ENCODE measurements at regions of chr2 and their contacts with region 1.

Region 1: GRCh38 chr2:102442967-102443828 is 20.2 kb downstream of the IL18RAP start:
- DNase-seq: peak; percentile 61
- H3K4me3 Mint-ChIP-seq: peak overlapping the region; percentile 17
- H3K27ac Mint-ChIP-seq: no peak overlapping the region
- H3K4me1 Mint-ChIP-seq: peaks cover 13% of the 10 kb centered on the region
- H3K27me3 Mint-ChIP-seq: no peaks in the 10 kb centered on the region

Region 2: GRCh38 chr2:102251042-102251848 is 192.0 kb before region 1 on chr2:
- CTCF ChIA-PET with region 1: interaction called, 63 read pairs
- DNase-seq: peak; percentile 67
- H3K4me3 Mint-ChIP-seq: peak overlapping the region; percentile 73
- H3K27ac Mint-ChIP-seq: peak overlapping the region; percentile 78
- H3K4me1 Mint-ChIP-seq: peaks cover 45% of the 10 kb centered on the region
- H3K27me3 Mint-ChIP-seq: peaks cover 11% of the 10 kb centered on the region

Region 3: GRCh38 chr2:102355526-102356380 is 87.4 kb before region 1 on chr2 and contains the start of gene IL18R1:
- CTCF ChIA-PET with region 1: interaction called, 56 read pairs
- DNase-seq: peak; percentile 80
- H3K4me3 Mint-ChIP-seq: peak within 1 kb of the TSS; percentile 100
- H3K27ac Mint-ChIP-seq: peak within 1 kb of the TSS; percentile 95
- H3K4me1 Mint-ChIP-seq: peaks cover 49% of the 10 kb centered on the region
- H3K27me3 Mint-ChIP-seq: peaks cover 4% of the 10 kb centered on the region

Region 4: DNA sequence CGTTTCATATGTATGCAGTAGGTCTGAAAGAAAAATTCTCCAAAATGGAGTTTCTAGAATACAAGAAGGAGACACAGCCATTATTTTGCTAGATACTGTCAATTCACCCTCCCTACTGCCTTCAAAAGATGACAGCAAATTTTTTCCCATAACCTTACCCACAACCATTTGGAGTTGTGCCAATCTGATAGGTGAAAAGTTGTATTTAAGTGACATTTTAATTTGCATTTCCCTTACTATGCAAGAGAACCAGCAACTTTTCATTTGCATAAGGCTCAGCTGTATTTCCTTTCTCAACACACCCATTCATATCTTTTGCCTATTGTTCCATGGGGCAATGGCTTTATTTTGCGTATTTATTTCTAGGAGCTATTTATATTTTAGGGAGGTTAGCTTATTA is 51.6 kb before region 1 on chr2:
- CTCF ChIA-PET with region 1: no interaction called
- DNase-seq: no peak
- H3K4me3 Mint-ChIP-seq: no peak overlapping the region
- H3K27ac Mint-ChIP-seq: no peak overlapping the region
- H3K4me1 Mint-ChIP-seq: peaks cover 9% of the 10 kb centered on the region
- H3K27me3 Mint-ChIP-seq: no peaks in the 10 kb centered on the region

Region 5: DNA sequence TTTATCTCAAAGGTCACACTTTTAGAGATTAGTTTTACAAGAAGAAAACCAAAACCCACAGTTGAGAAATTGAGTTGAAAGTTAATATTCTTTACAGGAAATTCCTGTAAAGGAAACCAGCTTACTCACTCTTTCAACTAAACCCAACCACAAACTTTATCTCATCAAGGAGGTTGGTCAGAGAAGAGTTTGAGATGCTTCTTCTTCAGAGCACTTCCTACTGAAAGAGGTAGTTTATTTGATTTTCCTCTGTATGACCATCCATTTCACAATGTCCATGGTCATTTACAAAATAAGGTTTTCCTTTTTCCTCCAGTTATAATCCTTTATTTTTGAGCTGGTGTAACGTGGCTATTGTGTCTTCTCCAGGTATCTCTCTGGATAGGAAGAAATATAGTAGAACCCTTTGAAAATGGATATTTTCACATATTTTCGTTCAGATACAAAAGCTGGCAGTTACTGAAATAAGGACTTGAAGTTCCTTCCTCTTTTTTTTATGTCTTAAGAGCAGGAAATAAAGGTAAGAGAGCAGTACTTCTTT is 24.7 kb before region 1 on chr2:
- CTCF ChIA-PET with region 1: interaction called, 25 read pairs
- DNase-seq: no peak
- H3K4me3 Mint-ChIP-seq: peak overlapping the region; percentile 66
- H3K27ac Mint-ChIP-seq: peak overlapping the region; percentile 91
- H3K4me1 Mint-ChIP-seq: peaks cover 77% of the 10 kb centered on the region
- H3K27me3 Mint-ChIP-seq: no peaks in the 10 kb centered on the region

Region 6: GRCh38 chr2:102604746-102605145 is 161.5 kb after region 1 on chr2:
- CTCF ChIA-PET with region 1: no interaction called
- DNase-seq: no peak
- H3K4me3 Mint-ChIP-seq: no peak overlapping the region
- H3K27ac Mint-ChIP-seq: no peak overlapping the region
- H3K4me1 Mint-ChIP-seq: no peaks in the 10 kb centered on the region
- H3K27me3 Mint-ChIP-seq: peaks cover 15% of the 10 kb centered on the region